Activated CD4-positive, alpha-beta memory T cell treated with anti-CD3 and anti-CD28 coated beads, Interleukin-2, amount 10 ng/mL, durations not matched to agents 7 days and 5 days (primary cell): ENCODE measurements at regions of chr3 and their contacts with region 1.

Region 1: DNA sequence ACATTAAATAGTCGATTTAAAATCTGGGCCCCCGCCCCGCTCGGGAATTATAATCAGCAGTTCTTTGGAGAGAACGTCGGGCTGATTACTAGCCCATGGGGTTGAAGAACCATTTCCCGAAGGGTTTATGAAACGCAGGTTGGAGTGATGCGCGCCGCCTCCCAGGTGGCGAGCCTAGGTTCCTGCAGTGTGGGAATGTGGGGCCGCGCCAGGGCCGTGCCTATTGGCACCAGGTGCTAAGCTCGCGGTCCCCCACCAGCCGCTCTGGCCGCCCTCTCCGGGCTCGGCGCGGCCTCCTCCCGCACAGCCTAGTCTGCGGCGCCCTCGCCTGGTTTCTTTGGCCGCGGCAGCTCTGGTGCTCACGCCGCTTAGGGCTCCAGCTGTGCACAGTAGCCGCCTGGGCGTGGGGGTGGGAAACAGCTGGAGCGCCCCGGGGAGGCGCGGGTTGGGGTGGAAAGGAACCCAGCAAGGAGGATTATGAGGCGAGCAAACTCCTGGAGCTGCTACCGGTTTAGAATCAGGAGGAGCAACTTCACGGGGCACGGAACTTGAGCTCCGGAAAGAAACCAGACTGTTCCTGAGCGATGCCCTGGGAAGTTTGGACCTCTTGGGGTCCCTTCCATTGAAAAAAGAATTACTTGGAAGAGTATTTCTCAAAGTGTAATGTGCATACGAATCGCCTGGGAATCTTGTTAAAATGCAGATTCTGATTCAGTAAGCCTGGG is 5.6 kb upstream of the MECOM start:
- DNase-seq: peak; percentile 54
- H3K4me3 Mint-ChIP-seq: no peak overlapping the region
- H3K27ac Mint-ChIP-seq: no peak overlapping the region
- H3K4me1 Mint-ChIP-seq: peaks cover 18% of the 10 kb centered on the region
- H3K27me3 Mint-ChIP-seq: peaks cover 88% of the 10 kb centered on the region

Region 2: DNA sequence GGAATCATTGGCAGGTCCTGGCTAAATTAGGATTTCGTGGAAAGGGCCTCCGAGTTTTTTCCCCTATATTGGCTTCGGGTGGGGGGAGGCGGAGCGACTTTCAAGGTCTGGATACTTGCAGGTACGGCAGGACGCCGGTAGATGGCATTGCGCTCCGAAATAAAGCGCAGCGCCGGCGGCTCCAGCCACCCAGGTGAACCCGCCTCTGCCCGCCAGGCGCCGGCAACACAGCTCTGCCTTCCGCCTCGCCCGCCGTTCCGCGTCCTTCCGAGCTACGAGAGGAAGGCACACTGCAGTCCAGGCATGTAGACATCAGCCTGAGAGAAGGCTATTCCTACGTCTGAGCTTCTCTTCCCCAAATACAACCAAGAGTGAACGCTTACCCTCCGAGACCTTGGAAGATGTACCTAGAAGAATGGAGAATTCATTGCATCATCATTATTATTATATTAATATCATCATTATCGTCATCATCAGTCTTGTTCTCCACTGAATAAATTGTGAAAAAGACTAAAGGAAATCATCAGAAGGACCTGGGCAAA is 519.7 kb before region 1 on chr3:
- CTCF ChIA-PET with region 1: interaction called, 33 read pairs
- POLR2A ChIA-PET with region 1: no interaction called
- DNase-seq: peak; percentile 77
- H3K4me3 Mint-ChIP-seq: no peak overlapping the region
- H3K27ac Mint-ChIP-seq: no peak overlapping the region
- H3K4me1 Mint-ChIP-seq: peaks cover 20% of the 10 kb centered on the region
- H3K27me3 Mint-ChIP-seq: peaks cover 71% of the 10 kb centered on the region

Region 3: DNA sequence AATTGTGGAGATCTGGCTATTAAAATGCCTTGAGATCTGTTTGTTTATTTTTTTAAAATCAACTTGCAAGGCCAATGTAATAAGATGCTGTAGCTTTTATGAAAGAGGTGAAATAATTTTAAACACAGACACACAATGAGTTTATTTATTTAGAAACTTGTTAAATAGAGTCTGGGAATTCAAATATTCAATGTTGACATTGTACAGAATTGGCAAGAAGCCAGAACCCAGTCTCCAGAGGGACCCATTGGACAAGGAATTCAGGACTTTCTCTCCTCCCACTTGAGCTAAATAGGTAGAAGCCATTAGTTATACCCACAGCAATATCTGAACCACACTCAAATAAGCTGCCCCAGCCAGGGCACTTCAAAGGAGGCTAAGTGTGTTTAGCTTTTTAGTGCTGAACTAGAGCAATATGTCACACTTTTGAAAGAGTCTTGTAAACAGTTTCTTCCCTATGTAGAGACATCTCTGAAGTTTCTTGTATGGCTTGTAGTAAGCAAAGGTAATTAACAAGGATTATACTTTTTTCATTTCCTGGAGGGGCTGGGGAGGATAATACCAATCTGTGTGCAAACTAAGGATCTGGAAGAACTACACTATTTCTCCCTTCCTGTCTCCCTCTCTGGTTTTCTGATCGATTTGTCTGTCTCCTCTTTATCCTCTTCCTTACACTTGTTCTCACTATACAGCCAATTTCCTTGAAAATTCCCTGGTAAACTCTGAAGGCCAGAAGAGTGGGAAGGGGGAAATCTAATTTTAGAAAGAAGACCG is 11.6 kb before region 1 on chr3:
- CTCF ChIA-PET with region 1: interaction called, 11 read pairs
- POLR2A ChIA-PET with region 1: interaction called, 5 read pairs
- DNase-seq: no peak
- H3K4me3 Mint-ChIP-seq: no peak overlapping the region
- H3K27ac Mint-ChIP-seq: no peak overlapping the region
- H3K4me1 Mint-ChIP-seq: peaks cover 34% of the 10 kb centered on the region
- H3K27me3 Mint-ChIP-seq: peaks cover 72% of the 10 kb centered on the region